Dendritic cell treated with granulocyte-macrophage colony-stimulating factor and Interleukin-4, amounts not matched to agents 40 ng/mL and 50 ng/mL, for 4 days (primary cell): ENCODE measurements at regions of chr1 and their contacts with region 1.

Region 1: GRCh38 chr1:33433509-33434362 is 2.8 kb upstream of the PHC2 start:
- H3K4me3 Mint-ChIP-seq: no peak overlapping the region
- H3K27ac Mint-ChIP-seq: peak overlapping the region; percentile 62
- H3K4me1 Mint-ChIP-seq: peaks cover 23% of the 10 kb centered on the region
- H3K27me3 Mint-ChIP-seq: peaks cover 3% of the 10 kb centered on the region

Region 2: GRCh38 chr1:33460947-33461629 is 27.4 kb after region 1 on chr1:
- intact Hi-C with region 1: loop called (anchors 2 kb)
- H3K4me3 Mint-ChIP-seq: peak overlapping the region; percentile 55
- H3K27ac Mint-ChIP-seq: peak overlapping the region; percentile 91
- H3K4me1 Mint-ChIP-seq: peaks cover 83% of the 10 kb centered on the region
- H3K27me3 Mint-ChIP-seq: peaks cover under 1% of the 10 kb centered on the region